ENCODE measurements at regions of chr4 and their contacts with region 1.

Region 1: GRCh38 chr4:68375667-68376559 is 26.0 kb upstream of the YTHDC1 start:
- DNase-seq: peak; percentile 61
- H3K4me3 Mint-ChIP-seq: peak overlapping the region; percentile 61
- H3K27ac Mint-ChIP-seq: no peak overlapping the region
- H3K4me1 Mint-ChIP-seq: peaks cover 21% of the 10 kb centered on the region
- H3K27me3 Mint-ChIP-seq: peaks cover 17% of the 10 kb centered on the region

Region 2: DNA sequence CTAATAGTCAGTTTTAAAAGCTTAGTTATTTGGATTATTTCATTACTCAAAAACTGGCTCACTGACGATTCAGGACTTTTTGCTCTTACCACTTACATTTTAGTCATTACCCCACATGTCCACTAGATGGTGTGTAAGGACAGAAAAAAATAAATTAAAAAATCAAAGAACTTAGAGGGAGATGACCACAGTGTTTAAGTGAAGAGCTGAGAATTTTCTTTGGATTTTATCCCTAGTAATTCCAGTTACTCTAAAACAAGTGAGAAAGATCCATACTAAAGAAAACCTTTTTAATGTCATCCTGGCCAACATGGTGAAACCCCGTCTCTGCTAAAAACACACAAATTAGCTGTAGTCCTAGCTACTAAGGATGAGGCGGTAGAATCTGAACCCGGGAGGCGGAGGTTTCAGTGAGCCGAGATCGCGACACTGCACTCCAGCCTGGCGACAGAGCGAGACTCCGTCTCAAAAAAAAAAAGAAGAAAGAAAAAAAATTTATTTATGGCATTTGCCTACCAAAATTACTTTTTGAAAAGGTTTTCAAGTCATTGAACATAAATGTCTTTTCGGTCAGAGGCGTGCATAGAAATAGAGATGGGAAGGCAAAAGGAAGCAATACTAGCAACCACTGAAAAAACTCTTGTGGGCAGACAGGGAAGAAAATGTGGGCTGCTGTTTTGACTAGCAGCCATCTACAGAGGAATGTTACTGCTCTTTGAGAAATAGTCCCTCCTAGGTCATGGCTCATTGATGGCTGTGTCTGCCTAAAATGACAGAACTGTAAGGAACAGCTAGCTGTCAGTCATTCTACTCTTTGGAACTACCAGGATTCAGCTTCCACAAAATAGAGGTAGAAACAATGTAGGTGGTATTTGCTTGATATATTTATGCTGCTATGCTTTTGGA is 103.8 kb before region 1 on chr4:
- CTCF ChIA-PET with region 1: interaction called, 46 read pairs
- DNase-seq: no peak
- H3K4me3 Mint-ChIP-seq: no peak overlapping the region
- H3K27ac Mint-ChIP-seq: no peak overlapping the region
- H3K4me1 Mint-ChIP-seq: peaks cover 6% of the 10 kb centered on the region
- H3K27me3 Mint-ChIP-seq: peaks cover 11% of the 10 kb centered on the region

Region 3: DNA sequence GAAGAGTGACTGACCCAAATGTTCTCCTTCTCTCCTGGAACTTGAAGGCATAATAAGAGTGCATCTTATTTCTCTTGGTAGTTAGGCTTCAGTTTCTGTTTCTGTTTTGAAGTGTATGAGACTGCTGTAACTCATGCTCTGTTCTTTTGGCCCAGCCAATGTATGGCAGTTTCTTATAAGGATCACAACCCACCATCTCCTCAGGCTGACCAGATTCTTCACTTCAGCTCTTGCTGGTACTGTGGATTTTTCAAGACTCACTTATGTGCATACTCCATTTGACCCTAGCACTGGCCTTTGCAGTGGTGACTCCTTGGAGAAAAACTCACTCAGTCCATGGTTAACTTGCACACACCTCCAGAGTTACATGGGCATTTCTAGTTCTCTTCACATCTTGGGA is 16.4 kb before region 1 on chr4:
- CTCF ChIA-PET with region 1: interaction called, 13 read pairs
- DNase-seq: peak; percentile 27
- H3K4me3 Mint-ChIP-seq: no peak overlapping the region
- H3K27ac Mint-ChIP-seq: peak overlapping the region; percentile 82
- H3K4me1 Mint-ChIP-seq: peaks cover 11% of the 10 kb centered on the region
- H3K27me3 Mint-ChIP-seq: peaks cover 8% of the 10 kb centered on the region

Region 4: GRCh38 chr4:68606240-68606639 is 230.3 kb after region 1 on chr4:
- CTCF ChIA-PET with region 1: no interaction called
- DNase-seq: no peak
- H3K4me3 Mint-ChIP-seq: no peak overlapping the region
- H3K27ac Mint-ChIP-seq: no peak overlapping the region
- H3K4me1 Mint-ChIP-seq: no peaks in the 10 kb centered on the region
- H3K27me3 Mint-ChIP-seq: no peaks in the 10 kb centered on the region

Measured in activated naive CD4-positive, alpha-beta T cell treated with anti-CD3 and anti-CD28 coated beads, Interleukin-2, amount 10 ng/mL, durations not matched to agents 7 days and 5 days (primary cell).